ENCODE measurements at regions of chr12 and their contacts with region 1.

Region 1: DNA sequence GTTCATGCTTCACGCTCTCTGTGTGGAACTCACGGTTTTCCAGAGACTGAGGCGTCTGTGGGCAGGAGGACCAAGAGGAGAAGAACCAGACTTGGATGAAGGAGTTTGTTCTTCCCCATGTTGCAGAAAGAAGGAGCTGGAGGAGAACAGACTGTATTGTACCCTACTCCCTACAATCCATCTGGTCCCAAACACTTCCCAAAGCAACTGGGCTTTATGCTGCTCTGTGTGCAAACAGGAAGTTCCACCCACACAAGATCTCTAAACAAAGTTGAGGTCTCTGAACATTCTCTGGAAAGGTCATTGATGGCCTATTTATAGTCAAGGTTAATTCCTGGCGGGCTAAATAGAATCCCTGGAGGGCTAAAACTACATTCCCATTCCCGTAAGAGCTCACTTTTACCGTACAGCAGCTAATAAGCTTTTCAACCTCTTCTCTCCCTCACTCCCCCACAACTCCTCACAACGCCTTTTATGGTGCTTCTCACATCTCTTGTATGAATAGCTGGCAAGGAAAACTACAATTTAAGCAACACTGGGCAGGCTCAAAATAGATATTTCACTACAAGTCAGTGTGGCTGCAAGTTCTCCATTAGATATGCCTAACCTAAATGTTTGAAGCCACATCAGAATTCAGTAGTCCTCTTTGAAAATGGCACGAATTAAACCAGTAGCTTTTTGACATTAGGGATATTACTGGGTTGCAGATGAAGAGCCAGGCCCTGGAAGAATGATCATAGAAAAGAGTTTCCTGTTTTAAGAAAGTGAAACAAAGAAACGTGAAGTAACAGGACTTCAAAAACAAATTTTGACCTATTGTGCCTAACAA is at the start of gene A2M:
- DNase-seq: no peak
- H3K4me3 ChIP-seq: peak within 1 kb of the TSS; percentile 26 to 49 (median 42)
- H3K27ac ChIP-seq: peak within 1 kb of the TSS; percentile 79 to 83 (median 82)
- H3K4me1 ChIP-seq: peaks cover 0 to 43% (median 34%) of the 10 kb centered on the region in 4 donors
- H3K27me3 ChIP-seq: no peaks in the 10 kb centered on the region
- CTCF ChIP-seq: no peak
- EP300 ChIP-seq: peak in 1 of 4 donors; percentile 59
- POLR2A ChIP-seq: no peak
- total RNA-seq, gene A2M: 195 to 296 (median 253) TPM

Region 2: GRCh38 chr12:9064201-9064814 is 51.6 kb before region 1 on chr12:
- intact Hi-C with region 1: loop called (anchors 2 kb)
- DNase-seq: peak; percentile 79
- H3K4me3 ChIP-seq: peak overlapping the region; percentile 73 to 95 (median 88)
- H3K27ac ChIP-seq: peak overlapping the region; percentile 96 to 100 (median 99)
- H3K4me1 ChIP-seq: peaks cover 0 to 16% (median 13%) of the 10 kb centered on the region in 4 donors
- H3K27me3 ChIP-seq: no peaks in the 10 kb centered on the region
- CTCF ChIP-seq: peak in 2 of 4 experiments; percentile 21 to 37
- EP300 ChIP-seq: no peak
- POLR2A ChIP-seq: peak; percentile 15 to 16